ENCODE measurements at regions of chr2 and their contacts with region 1.

Region 1: DNA sequence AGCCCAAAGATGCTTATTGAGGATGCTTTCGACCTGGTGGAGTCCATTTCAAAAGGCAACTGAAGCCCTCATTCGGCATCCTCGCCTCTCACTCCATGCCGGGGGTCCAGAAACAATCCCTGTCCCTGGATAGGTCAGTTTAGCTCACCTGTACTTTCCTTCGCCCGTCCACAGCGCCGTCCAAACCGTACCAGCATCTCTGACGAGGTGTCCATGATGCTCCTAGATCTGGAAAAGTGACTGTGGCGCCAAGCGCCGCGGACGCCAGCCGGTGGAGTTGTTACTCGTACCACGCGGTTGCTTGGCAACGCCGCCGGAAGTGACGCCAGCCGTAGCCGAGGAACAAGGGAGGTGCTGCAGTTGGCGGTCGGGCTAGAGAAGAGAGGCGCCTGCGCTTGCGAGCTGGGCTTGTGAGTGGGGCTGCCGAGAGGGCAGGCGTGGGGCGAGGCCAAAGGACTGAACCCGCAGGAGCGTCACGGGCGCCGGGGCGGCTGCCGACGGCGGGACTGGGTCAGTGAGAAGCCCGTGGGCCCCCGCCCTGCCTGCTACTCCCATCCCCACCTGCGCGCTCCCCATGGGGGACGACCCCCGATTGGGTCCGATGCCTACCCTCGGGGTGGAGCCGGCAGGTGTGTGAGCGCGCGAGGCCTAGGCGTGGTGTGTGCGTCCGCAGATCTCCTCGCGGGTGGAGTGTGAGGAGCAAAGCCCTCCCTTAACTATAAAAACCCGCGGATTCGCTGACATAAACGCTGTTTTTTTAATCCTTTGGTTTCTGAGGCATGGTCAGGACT is at the starts of genes CFAP210 and PHOSPHO2:
- DNase-seq: peak; percentile 77
- H3K4me3 ChIP-seq: peak within 1 kb of the TSS; percentile 84
- H3K27me3 ChIP-seq: 0 out of 2 replicates have a peak, but pooled peaks cover 3% of the 10 kb centered on the region
- CTCF ChIP-seq: no peak
- polyA plus RNA-seq, gene CFAP210: not detected in 2 replicates
- polyA plus RNA-seq, gene PHOSPHO2: 0.40 and 1.4 TPM in 2 replicates

Region 2: DNA sequence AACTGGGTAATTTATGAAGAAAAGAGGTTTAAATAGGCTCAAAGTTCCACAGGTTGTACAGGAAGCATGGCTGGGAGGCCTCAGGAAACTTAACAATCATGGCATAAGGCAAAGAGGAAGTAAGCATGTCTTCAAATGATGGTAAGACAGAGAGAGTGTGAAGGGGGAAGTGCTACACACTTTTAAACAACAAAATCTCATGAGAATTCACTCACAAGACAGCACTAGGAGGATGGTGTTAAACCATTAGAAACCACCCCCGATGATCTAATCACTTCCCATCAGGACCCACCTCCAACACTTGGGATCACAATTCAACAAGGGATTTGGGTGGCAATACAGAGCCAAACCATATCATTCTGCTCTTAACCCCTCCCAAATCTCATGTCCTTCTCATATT is 35.0 kb before region 1 on chr2:
- CTCF ChIA-PET with region 1: no interaction called
- POLR2A ChIA-PET with region 1: no interaction called
- DNase-seq: no peak
- H3K4me3 ChIP-seq: no peak overlapping the region
- H3K27me3 ChIP-seq: peaks cover 1% of the 10 kb centered on the region; the same call in 1 of the 2 replicates
- CTCF ChIP-seq: no peak

Region 3: DNA sequence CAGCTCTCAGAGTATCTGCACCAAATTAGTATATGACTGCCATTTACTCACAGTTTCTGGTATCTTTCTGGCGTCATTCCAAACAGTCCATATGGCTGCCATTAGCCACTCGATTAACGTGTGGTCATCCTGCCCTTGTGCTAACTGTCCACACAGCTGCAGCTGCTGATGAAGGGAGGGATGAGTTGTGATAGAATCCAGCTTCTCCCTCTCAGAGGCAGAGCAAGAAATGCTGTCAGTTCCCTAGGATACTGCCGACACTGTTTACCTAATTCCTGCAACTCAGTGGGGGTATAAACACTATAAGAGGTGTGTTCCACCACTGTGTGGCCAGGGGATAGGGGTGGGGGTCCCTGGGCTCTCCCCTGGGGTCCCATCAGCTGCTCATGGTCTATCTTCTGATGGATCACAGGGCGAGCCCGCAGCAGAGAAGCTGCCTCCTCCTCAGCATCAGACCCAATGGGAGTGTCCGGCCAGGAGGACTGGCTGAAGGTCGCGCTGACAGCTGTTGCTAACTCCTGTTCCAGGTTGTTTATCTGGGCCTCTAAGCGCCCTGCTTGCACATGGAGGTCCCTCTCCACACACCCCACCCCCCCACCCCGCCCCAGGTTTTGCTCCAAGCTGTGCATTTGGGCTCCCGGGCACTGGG is 22.1 kb after region 1 on chr2:
- CTCF ChIA-PET with region 1: no interaction called
- POLR2A ChIA-PET with region 1: interaction called, 10 read pairs
- DNase-seq: peak; percentile 15
- H3K4me3 ChIP-seq: no peak overlapping the region
- H3K27me3 ChIP-seq: no peaks in the 10 kb centered on the region
- CTCF ChIP-seq: no peak

Measured in BJ (cell line).